Endothelial cell of umbilical vein (primary cell): ENCODE measurements at regions of chr21 and their contacts with region 1.

Region 1: GRCh38 chr21:36647279-36648093 is 51.4 kb upstream of the SIM2 start:
- DNase-seq: peak; percentile 65
- H3K4me3 ChIP-seq: no peak overlapping the region
- H3K27ac ChIP-seq: peak overlapping the region; percentile 77
- H3K4me1 ChIP-seq: peaks cover 20% of the 10 kb centered on the region
- H3K27me3 ChIP-seq: no peaks in the 10 kb centered on the region
- CTCF ChIP-seq: no peak
- POLR2A ChIP-seq: no peak

Region 2: DNA sequence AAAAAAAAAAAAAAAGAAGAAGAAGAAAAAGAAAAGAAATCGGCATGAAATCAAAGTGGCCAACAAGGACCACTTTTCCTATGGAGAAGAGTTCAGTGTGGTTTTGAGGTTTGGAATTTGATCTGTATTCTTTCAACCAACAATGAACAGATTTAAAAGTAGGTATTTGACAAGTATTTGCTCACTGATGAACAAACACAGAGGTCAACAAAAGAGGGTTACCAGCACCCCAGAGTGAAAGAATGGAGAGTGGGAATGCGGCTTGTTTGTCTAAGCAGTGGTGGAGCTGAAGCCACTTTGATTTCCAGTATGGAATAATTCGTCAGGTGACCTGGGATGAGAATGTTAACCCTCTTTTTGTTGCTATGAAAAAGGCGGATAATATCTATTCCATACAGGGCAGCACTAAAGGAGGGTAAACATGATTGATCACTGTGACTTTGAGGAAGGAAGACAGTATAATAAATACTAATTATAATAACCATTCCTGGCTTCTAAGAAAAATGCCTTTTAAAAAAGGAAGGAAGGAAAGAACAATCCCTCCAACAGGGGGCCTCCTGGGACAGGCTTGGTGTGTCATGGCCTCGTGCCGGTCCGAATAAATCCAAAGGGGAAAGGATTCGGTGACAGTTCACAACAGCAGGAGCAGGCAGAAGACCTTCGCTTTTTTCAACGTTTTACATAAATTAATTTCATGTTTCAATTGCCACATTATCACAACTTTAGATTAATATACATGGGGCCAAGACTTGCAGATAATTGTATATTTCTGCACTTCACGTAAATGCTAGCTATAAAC is 14.2 kb after region 1 on chr21:
- CTCF ChIA-PET with region 1: interaction called, 13 read pairs
- POLR2A ChIA-PET with region 1: no interaction called
- dilution Hi-C with region 1: no loop called
- intact Hi-C with region 1: no loop called
- DNase-seq: peak; percentile 41
- H3K4me3 ChIP-seq: no peak overlapping the region
- H3K27ac ChIP-seq: no peak overlapping the region
- H3K4me1 ChIP-seq: no peaks in the 10 kb centered on the region
- H3K27me3 ChIP-seq: peaks cover 16 to 27% of the 10 kb centered on the region in 2 experiments
- CTCF ChIP-seq: peak; percentile 47 to 51
- POLR2A ChIP-seq: no peak

Region 3: GRCh38 chr21:37335053-37335452 is 687.6 kb after region 1 on chr21:
- CTCF ChIA-PET with region 1: no interaction called
- POLR2A ChIA-PET with region 1: no interaction called
- dilution Hi-C with region 1: no loop called
- intact Hi-C with region 1: no loop called
- DNase-seq: no peak
- H3K4me3 ChIP-seq: no peak overlapping the region
- H3K27ac ChIP-seq: no peak overlapping the region
- H3K4me1 ChIP-seq: peaks cover 18% of the 10 kb centered on the region
- H3K27me3 ChIP-seq: no peaks in the 10 kb centered on the region
- CTCF ChIP-seq: no peak
- POLR2A ChIP-seq: no peak